Posterior cingulate gyrus (tissue), 11 donors: ENCODE measurements at regions of chr3 and their contacts with region 1.

Region 1: DNA sequence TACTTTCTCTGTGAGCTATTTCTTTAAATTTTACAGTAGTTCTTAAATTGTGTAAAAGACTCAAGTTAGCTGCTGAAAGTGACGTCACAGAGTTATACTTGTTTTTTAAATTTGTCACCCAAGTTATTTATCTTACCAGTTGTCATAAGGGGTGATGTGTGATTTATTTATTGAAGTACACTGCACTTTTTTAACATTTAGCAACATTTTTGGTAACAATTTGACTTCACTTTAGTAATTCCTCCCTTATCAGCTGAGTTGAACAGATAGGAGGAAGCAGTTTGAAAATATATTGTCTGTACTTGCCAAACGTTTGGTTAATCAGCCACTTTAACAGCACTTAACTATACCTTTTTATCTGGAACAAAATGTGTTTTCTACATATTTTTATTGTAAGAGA is 3.8 kb downstream of the STT3B start:
- DNase-seq: no peak

Region 2: GRCh38 chr3:32106280-32106928 is 569.9 kb after region 1 on chr3 and contains the start of gene GPD1L:
- intact Hi-C with region 1: loop called (anchors 5 kb)
- DNase-seq: peak; percentile 91 to 100 (median 96)